PC-9 (cell line): ENCODE measurements at regions of chr6 and their contacts with region 1.

Region 1: GRCh38 chr6:47780510-47781356 is 1.1 kb upstream of the OPN5 start:
- DNase-seq: peak; percentile 32 to 67
- H3K4me3 ChIP-seq: peak overlapping the region; percentile 17; the same call in 1 of the 2 replicates
- H3K27ac ChIP-seq: no peak overlapping the region
- H3K4me1 ChIP-seq: peaks cover 4% of the 10 kb centered on the region; the same call in 1 of the 2 replicates
- H3K27me3 ChIP-seq: no peaks in the 10 kb centered on the region
- CTCF ChIP-seq: peak; percentile 76

Region 2: GRCh38 chr6:46453221-46453620 is 1327.5 kb before region 1 on chr6:
- CTCF ChIA-PET with region 1: no interaction called
- POLR2A ChIA-PET with region 1: no interaction called
- intact Hi-C with region 1: no loop called
- DNase-seq: no peak
- H3K4me3 ChIP-seq: no peak overlapping the region
- H3K27ac ChIP-seq: no peak overlapping the region
- H3K4me1 ChIP-seq: no peaks in the 10 kb centered on the region
- H3K27me3 ChIP-seq: no peaks in the 10 kb centered on the region
- CTCF ChIP-seq: no peak

Region 3: DNA sequence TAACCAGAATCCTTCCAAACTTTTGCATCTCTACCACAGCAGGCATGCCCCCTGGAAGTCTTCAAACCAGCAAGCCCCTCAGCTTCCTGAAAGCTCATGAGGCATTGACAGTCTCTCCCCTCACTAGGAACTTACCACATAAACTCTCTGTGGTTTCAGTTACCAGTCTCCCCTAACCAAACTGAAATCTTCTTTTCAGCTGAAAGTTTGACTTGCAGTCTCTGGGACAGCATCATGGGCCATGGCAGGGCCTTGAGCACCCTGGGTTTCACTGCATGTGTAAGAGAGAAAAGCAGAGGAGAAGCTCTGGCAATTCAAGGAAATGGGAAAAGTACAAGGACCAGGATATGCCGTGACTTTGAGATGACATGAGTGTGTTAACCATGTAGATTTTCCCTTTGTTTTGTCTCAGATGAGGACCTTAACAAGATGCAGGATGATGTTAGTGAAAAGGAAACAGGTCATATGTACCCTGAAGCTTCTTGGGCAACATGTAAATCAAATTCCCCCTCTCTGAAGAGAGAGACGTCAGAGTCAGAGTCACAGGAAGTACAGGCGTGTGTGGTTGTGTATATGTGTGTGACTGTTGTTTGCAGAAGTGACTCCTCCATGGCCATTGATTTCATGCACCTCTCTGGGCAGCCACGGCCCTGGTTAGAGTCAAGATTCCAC is 577.3 kb before region 1 on chr6:
- CTCF ChIA-PET with region 1: no interaction called
- POLR2A ChIA-PET with region 1: no interaction called
- intact Hi-C with region 1: no loop called
- DNase-seq: no peak
- H3K4me3 ChIP-seq: no peak overlapping the region
- H3K27ac ChIP-seq: no peak overlapping the region
- H3K4me1 ChIP-seq: peaks cover 21% of the 10 kb centered on the region; the same call in 1 of the 2 replicates
- H3K27me3 ChIP-seq: no peaks in the 10 kb centered on the region
- CTCF ChIP-seq: no peak

Region 4: GRCh38 chr6:47413752-47414422 is 366.8 kb before region 1 on chr6:
- CTCF ChIA-PET with region 1: no interaction called
- POLR2A ChIA-PET with region 1: no interaction called
- intact Hi-C with region 1: loop called (anchors 2 kb)
- DNase-seq: peak; percentile 28 to 47
- H3K4me3 ChIP-seq: peak overlapping the region; percentile 50; the same call in 1 of the 2 replicates
- H3K27ac ChIP-seq: peak overlapping the region; percentile 57; the same call in 1 of the 2 replicates
- H3K4me1 ChIP-seq: peaks cover 16% of the 10 kb centered on the region
- H3K27me3 ChIP-seq: no peaks in the 10 kb centered on the region
- CTCF ChIP-seq: peak; percentile 90

Region 5: DNA sequence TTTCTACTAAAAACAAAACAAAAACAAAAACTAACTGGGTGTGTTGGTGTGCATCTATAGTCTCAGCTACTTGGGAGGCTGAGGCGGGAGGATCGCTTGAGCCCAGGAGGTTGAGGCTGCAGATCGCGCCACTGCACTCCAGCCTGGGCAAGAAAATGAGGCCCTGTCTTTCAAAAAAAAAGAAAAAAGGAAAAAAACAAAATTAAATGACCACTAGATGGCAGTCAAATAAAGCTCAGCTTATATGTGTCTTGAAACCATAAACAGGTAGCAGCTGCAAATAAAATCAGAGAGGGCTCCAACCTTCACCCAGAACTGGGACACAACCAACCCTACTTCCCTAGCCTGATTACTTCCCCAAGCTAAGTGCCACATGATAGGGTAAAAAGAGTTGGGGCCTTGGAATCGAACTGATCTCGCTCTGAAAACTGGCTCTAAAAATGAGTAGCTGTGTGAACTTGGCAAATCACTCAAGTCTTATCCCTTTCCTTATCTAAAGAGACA is 149.4 kb before region 1 on chr6:
- CTCF ChIA-PET with region 1: interaction called, 6 read pairs
- POLR2A ChIA-PET with region 1: no interaction called
- intact Hi-C with region 1: loop called (anchors 1 kb)
- DNase-seq: peak; percentile 18 to 70
- H3K4me3 ChIP-seq: no peak overlapping the region
- H3K27ac ChIP-seq: no peak overlapping the region
- H3K4me1 ChIP-seq: peaks cover 5% of the 10 kb centered on the region
- H3K27me3 ChIP-seq: no peaks in the 10 kb centered on the region
- CTCF ChIP-seq: peak; percentile 89

Region 6: GRCh38 chr6:47701352-47701751 is 79.4 kb before region 1 on chr6:
- CTCF ChIA-PET with region 1: no interaction called
- POLR2A ChIA-PET with region 1: no interaction called
- intact Hi-C with region 1: loop called (anchors 2 kb)
- DNase-seq: peak; percentile 31 to 97
- H3K4me3 ChIP-seq: peak overlapping the region; percentile 76; the same call in 1 of the 2 replicates
- H3K27ac ChIP-seq: peak overlapping the region; percentile 100
- H3K4me1 ChIP-seq: peaks cover 55% of the 10 kb centered on the region
- H3K27me3 ChIP-seq: no peaks in the 10 kb centered on the region
- CTCF ChIP-seq: no peak

Region 7: GRCh38 chr6:47741807-47742206 is 38.9 kb before region 1 on chr6:
- CTCF ChIA-PET with region 1: no interaction called
- POLR2A ChIA-PET with region 1: interaction called, 4 read pairs
- intact Hi-C with region 1: loop called (anchors 2 kb)
- DNase-seq: peak; percentile 29 to 88
- H3K4me3 ChIP-seq: no peak overlapping the region
- H3K27ac ChIP-seq: peak overlapping the region; percentile 81
- H3K4me1 ChIP-seq: peaks cover 15% of the 10 kb centered on the region
- H3K27me3 ChIP-seq: no peaks in the 10 kb centered on the region
- CTCF ChIP-seq: no peak

Region 8: DNA sequence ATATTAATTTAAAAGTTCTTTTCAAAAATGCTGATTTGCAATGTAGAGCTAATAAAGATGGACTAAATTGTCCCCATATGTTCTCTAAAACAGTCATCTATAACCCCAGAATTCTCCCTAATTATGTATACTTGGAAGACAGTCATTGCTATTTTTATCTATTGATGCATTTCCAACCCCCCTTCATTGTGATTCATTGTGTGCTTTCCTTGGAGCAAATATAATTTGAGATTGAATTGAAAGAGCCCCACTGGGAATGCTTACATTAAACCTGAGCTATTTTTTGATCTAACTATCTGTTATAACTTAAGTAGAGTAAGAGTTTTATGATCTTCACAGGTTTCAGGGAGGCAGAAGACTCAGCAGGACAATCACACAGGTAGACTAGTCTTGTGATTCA is 403.9 kb after region 1 on chr6:
- CTCF ChIA-PET with region 1: no interaction called
- POLR2A ChIA-PET with region 1: no interaction called
- intact Hi-C with region 1: no loop called
- DNase-seq: no peak
- H3K4me3 ChIP-seq: no peak overlapping the region
- H3K27ac ChIP-seq: no peak overlapping the region
- H3K4me1 ChIP-seq: no peaks in the 10 kb centered on the region
- H3K27me3 ChIP-seq: no peaks in the 10 kb centered on the region
- CTCF ChIP-seq: no peak